PC-9 (cell line): ENCODE measurements at regions of chr7 and their contacts with region 1.

Region 1: DNA sequence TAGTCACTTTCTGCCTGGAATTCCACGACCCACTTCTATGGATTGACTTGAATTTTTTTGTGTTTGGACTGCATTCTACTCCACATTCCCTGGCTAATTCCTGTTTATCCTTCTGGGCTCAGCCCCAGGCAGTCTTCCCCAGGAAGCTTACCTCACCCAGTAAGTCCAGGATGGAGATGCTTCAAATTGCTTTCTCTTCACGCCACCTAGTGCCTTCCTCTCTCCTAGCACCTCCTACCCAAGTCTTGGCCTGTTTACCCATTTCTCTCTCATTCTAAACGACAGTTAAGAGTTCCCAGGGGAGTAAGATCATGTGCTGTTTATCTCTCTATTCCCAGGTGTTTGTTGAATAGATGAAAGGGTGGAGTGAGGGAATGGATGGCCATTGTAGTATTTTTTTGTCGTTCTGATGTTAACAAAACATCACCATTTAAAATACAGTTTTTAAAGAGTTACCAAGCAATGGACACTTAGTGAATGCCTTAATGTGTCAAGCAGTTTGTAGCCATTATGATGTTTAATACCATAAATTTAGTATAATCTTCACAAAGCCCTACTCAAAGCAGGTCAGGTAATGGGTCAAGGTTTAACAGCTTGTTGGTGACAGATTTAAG is 45.5 kb upstream of the TARP start:
- DNase-seq: peak; percentile 20 to 45
- H3K4me3 ChIP-seq: no peak overlapping the region
- H3K27ac ChIP-seq: no peak overlapping the region
- H3K4me1 ChIP-seq: no peaks in the 10 kb centered on the region
- H3K27me3 ChIP-seq: peaks cover 41% of the 10 kb centered on the region
- CTCF ChIP-seq: peak; percentile 70

Region 2: DNA sequence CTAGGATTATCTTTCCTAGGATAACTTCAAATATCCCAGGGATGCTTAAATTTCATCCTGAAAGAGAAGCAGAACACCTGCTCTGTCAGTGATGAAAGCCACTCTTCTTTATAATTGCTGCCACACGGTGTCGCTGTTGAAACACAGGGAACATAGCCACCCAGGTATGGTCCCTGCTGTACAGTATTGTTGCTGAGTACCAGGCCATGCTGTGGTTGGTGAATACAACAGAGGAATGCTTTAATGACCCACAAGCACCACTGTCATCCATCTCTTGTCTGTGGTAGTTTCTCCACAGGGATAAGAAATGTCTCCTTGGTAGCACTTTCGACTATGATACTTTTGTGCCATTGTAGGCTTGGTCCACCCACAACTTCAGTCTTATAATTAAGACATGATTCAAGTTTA is 211.4 kb before region 1 on chr7:
- CTCF ChIA-PET with region 1: interaction called, 5 read pairs
- POLR2A ChIA-PET with region 1: interaction called, 3 read pairs
- intact Hi-C with region 1: loop called (anchors 1 kb)
- DNase-seq: peak; percentile 47 to 59
- H3K4me3 ChIP-seq: no peak overlapping the region
- H3K27ac ChIP-seq: no peak overlapping the region
- H3K4me1 ChIP-seq: no peaks in the 10 kb centered on the region
- H3K27me3 ChIP-seq: peaks cover 20% of the 10 kb centered on the region; the same call in 1 of the 2 replicates
- CTCF ChIP-seq: peak; percentile 90

Region 3: GRCh38 chr7:38245409-38245977 is 73.4 kb before region 1 on chr7:
- CTCF ChIA-PET with region 1: no interaction called
- POLR2A ChIA-PET with region 1: no interaction called
- intact Hi-C with region 1: no loop called
- DNase-seq: no peak
- H3K4me3 ChIP-seq: no peak overlapping the region
- H3K27ac ChIP-seq: no peak overlapping the region
- H3K4me1 ChIP-seq: no peaks in the 10 kb centered on the region
- H3K27me3 ChIP-seq: peaks cover 86% of the 10 kb centered on the region
- CTCF ChIP-seq: no peak